ENCODE measurements at regions of chr5 and their contacts with region 1.

Region 1: DNA sequence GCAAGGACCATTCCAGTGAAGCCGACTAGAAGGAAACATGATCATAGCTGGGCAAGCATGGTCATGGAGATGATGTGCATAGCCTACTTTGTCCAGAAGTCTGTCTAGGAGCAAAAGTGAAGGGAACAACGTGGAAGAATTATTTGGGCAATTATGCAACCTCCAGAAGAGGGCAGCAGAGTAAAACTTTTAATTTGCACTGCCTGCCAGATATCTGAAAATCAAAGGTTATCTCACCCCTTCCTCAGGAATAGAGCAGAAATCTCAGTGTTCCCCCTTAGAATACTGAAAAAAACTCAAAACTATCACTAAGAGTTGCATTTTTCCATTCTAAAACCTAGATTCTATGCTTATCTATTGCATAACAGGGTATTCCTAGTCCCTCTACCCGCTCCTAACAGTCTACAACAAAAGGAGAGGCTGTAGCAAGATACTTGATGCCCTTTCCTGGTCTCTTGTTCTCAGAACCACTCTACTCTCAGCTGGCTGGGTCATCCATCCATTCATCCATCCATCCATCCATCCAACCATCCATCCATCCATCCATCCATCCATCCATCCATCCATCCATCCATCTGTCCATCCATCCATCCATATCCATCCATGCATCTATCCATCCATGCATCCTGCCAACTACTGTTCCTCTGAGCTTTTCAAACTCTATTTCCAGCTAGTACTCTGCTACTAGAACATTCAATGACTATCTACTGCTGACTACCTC is 8.4 kb upstream of the SETD9 start:
- DNase-seq: no peak
- H3K4me3 ChIP-seq: no peak overlapping the region
- H3K27ac ChIP-seq: no peak overlapping the region
- H3K4me1 ChIP-seq: peaks cover 0 to 9% (median 8%) of the 10 kb centered on the region in 6 donors
- H3K27me3 ChIP-seq: no peaks in the 10 kb centered on the region
- CTCF ChIP-seq: peak; percentile 29 to 75 (median 71)
- POLR2A ChIP-seq: no peak

Region 2: DNA sequence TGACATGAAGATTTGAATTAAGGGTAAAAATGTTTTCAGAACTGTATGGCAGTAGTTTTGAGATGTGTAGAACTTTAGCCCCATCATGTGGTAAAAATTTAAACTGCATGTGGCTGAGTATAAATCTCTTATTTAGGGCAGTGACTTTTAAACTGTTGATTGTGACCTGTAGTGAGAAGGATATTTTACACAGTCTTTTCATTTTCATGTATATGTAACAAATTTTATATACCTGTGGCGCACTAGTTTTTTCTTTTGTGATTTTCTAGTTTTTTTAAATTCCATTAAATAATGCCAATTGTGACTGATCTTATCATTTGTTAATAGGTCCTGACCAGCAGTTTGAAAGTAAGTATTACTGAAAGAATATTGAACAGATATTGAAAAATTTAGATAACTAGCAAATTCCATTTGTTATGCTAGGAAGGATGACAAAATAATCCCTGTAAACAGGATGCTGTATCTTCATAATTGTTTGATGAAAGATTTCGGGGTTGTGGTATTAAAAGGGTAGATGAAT is 320.1 kb after region 1 on chr5:
- intact Hi-C with region 1: loop called (anchors 2 kb)
- DNase-seq: no peak
- H3K4me3 ChIP-seq: no peak overlapping the region
- H3K27ac ChIP-seq: no peak overlapping the region
- H3K4me1 ChIP-seq: peaks cover 9 to 78% (median 31%) of the 10 kb centered on the region in 6 donors
- H3K27me3 ChIP-seq: no peaks in the 10 kb centered on the region
- CTCF ChIP-seq: peak; percentile 55 to 97 (median 85)
- POLR2A ChIP-seq: no peak

Region 3: GRCh38 chr5:57267805-57268204 is 366.8 kb after region 1 on chr5:
- intact Hi-C with region 1: no loop called
- DNase-seq: no peak
- H3K4me3 ChIP-seq: no peak overlapping the region
- H3K27ac ChIP-seq: no peak overlapping the region
- H3K4me1 ChIP-seq: peaks cover 0 to 5% (median 0%) of the 10 kb centered on the region in 6 donors
- H3K27me3 ChIP-seq: no peaks in the 10 kb centered on the region
- CTCF ChIP-seq: no peak
- POLR2A ChIP-seq: no peak

Measured in spleen (tissue), 13 donors.